CD14-positive monocyte (primary cell): ENCODE measurements at regions of chr16 and their contacts with region 1.

Region 1: DNA sequence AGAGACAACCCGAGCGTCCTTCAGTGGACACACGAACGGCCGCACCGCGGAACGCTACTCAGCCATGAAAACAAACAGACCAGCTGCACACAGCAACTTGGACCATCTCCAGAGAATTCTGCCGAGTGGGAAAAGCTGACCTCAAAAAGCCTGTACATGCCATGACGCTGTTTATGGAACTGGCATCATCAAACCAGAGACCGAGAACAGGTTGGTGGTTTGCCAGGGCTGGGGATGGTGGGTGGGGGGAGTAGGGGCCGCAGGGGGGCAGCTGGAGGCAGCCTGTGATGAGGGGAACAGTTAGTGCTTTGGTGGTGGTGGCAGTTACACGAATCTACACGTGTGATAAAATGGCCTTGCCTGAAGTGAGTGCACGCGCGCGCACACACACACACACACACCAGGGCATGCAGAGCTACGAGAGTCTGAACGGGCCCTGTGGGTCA is 169.8 kb downstream of the LAT start:
- DNase-seq: no peak
- H3K4me3 ChIP-seq: no peak overlapping the region
- H3K4me3 Mint-ChIP-seq: peak overlapping the region; percentile 42 to 48
- H3K27ac ChIP-seq: peak overlapping the region; percentile 98 to 100
- H3K27ac Mint-ChIP-seq: peak overlapping the region; percentile 90 to 100 (median 100)
- H3K4me1 ChIP-seq: peaks cover 73 to 76% of the 10 kb centered on the region in 2 donors
- H3K4me1 Mint-ChIP-seq: peaks cover 72% of the 10 kb centered on the region
- H3K27me3 ChIP-seq: no peaks in the 10 kb centered on the region
- H3K27me3 Mint-ChIP-seq: peaks cover 0 to 2% (median 0%) of the 10 kb centered on the region in 3 donors
- CTCF ChIP-seq: no peak

Region 2: DNA sequence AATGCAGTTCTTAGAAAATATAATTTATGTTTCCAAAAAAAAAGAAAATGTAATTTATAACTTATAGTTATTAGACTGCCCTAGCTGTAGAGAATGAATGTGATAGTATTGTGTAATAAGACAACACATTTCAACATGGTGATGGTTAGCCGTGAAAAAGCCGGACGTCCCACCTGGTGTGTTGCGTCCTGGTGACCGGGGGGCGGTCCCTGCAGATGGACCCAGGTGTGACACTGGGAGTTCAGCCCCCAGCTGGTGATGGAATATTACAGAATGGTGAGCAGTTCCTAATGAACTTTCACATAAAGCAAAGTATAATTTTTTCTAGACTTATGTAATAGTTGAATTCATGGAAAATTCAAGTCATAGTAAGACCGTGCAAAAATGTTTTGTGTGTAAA is 37.1 kb before region 1 on chr16:
- intact Hi-C with region 1: loop called (anchors 5 kb)
- DNase-seq: peak in 1 of 3 donors; percentile 41
- H3K4me3 ChIP-seq: no peak overlapping the region
- H3K4me3 Mint-ChIP-seq: no peak overlapping the region
- H3K27ac ChIP-seq: peak overlapping the region; percentile 87 to 97
- H3K27ac Mint-ChIP-seq: peak overlapping the region; percentile 95 to 98 (median 96)
- H3K4me1 ChIP-seq: peaks cover 50 to 51% of the 10 kb centered on the region in 2 donors
- H3K4me1 Mint-ChIP-seq: peaks cover 39% of the 10 kb centered on the region
- H3K27me3 ChIP-seq: no peaks in the 10 kb centered on the region
- H3K27me3 Mint-ChIP-seq: peaks cover 0 to 6% (median 0%) of the 10 kb centered on the region in 3 donors
- CTCF ChIP-seq: no peak

Region 3: GRCh38 chr16:29139261-29139811 is 15.4 kb before region 1 on chr16:
- intact Hi-C with region 1: no loop called
- DNase-seq: peak in 1 of 3 donors; percentile 1
- H3K4me3 ChIP-seq: no peak overlapping the region
- H3K4me3 Mint-ChIP-seq: no peak overlapping the region
- H3K27ac ChIP-seq: no peak overlapping the region
- H3K27ac Mint-ChIP-seq: peak overlapping the region in 4 of 7 donors; percentile 4 to 77 (median 32)
- H3K4me1 ChIP-seq: no peaks in the 10 kb centered on the region
- H3K4me1 Mint-ChIP-seq: peaks cover 4% of the 10 kb centered on the region
- H3K27me3 ChIP-seq: no peaks in the 10 kb centered on the region
- H3K27me3 Mint-ChIP-seq: peaks cover 0 to 4% (median 0%) of the 10 kb centered on the region in 3 donors
- CTCF ChIP-seq: no peak